ENCODE measurements at regions of chr15 and their contacts with region 1.

Region 1: GRCh38 chr15:60585743-60586708 is 107.1 kb upstream of the ICE2 start:
- DNase-seq: no peak
- H3K4me3 ChIP-seq: no peak overlapping the region
- H3K27ac ChIP-seq: peak overlapping the region in 1 of 4 donors; percentile 16
- H3K4me1 ChIP-seq: peaks cover 0 to 38% (median 22%) of the 10 kb centered on the region in 4 donors
- H3K27me3 ChIP-seq: no peaks in the 10 kb centered on the region
- CTCF ChIP-seq: peak; percentile 41 to 89 (median 84)
- EP300 ChIP-seq: no peak
- POLR2A ChIP-seq: no peak

Region 2: GRCh38 chr15:60520825-60521368 is 65.1 kb before region 1 on chr15:
- intact Hi-C with region 1: loop called (anchors 5 kb)
- DNase-seq: no peak
- H3K4me3 ChIP-seq: no peak overlapping the region
- H3K27ac ChIP-seq: no peak overlapping the region
- H3K4me1 ChIP-seq: no peaks in the 10 kb centered on the region
- H3K27me3 ChIP-seq: no peaks in the 10 kb centered on the region
- CTCF ChIP-seq: peak; percentile 36 to 85 (median 62)
- EP300 ChIP-seq: no peak
- POLR2A ChIP-seq: no peak

Region 3: DNA sequence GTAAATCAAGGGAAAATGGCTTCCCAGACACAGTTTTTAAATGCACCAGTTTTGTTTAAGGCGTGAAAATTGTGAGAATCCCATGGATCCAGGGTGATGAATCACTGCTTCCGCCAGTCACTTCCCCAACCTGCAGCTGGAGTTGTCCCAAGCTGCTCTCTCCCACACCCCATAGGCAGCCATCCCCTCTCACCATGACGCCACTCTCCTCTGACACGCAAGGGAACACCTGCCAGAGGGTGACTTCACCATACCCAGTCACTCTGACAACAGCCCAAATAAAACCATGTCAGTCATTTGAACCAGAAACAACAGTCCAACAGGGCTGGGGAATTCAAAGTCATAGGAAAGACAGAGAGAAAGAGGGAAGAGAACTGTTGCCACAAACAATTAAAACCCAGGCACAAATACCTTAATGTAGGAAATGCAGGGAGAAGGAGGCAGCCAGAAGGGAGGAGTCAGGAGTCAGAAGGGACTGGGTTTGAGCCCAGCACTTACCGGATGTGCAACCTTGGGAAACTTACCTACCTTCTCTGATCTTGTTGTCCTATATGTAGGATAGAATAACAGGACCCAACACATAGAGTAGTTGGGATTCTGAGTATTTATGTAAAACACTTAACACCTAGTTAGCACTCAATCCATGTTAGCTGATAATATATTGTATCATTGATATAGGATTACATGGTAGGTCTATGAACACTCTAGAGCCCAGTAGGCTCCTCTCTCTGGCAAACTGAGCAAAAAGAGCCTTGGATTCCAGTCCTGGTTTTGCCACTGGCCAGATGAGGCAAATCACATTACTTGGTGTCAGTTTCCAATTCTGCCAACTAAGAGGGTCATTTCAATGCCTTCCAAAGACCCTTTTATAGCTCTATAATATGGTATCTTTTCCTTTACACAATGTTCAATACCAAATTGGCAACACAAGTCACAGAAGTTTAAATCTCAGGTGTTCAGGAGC is 219.2 kb after region 1 on chr15:
- intact Hi-C with region 1: loop called (anchors 10 kb)
- DNase-seq: no peak
- H3K4me3 ChIP-seq: no peak overlapping the region
- H3K27ac ChIP-seq: no peak overlapping the region
- H3K4me1 ChIP-seq: peaks cover 0 to 32% (median 21%) of the 10 kb centered on the region in 4 donors
- H3K27me3 ChIP-seq: no peaks in the 10 kb centered on the region
- CTCF ChIP-seq: no peak
- EP300 ChIP-seq: no peak
- POLR2A ChIP-seq: no peak

Region 4: GRCh38 chr15:61051569-61052031 is 465.6 kb after region 1 on chr15:
- intact Hi-C with region 1: loop called (anchors 2 kb)
- DNase-seq: peak; percentile 71
- H3K4me3 ChIP-seq: no peak overlapping the region
- H3K27ac ChIP-seq: peak overlapping the region in 3 of 4 donors; percentile 57 to 64 (median 57)
- H3K4me1 ChIP-seq: peaks cover 0 to 36% (median 21%) of the 10 kb centered on the region in 4 donors
- H3K27me3 ChIP-seq: no peaks in the 10 kb centered on the region
- CTCF ChIP-seq: peak; percentile 11 to 61 (median 45)
- EP300 ChIP-seq: no peak
- POLR2A ChIP-seq: no peak

Region 5: DNA sequence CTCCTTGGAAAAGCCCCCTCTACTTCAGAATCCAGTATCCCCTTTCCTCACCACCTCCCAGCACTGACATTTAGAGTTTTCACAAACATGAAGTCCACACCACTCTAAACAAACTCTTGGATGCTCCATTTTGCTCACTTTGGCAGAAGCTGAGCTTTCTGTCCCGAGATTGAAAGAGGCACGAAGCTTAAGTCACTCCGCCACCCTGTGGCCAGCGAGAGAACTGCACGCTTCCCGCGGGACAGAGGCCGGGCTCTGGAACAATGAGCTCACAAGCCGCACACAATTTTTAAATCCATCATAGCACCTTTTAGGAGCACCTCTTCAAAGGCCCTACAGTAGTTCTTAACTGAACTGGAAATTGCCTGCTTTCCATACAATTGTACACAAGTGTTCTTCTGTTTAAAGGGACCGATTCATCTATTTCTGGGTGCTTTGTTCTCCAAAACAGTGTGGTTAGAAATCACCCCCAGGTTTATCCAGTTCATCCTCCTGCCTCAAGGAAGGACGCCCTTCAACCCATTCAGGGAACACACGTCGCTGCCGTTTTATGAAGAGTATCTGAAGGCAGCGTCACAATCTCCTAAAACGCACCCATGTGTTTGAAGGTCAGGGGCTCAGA is 1248.2 kb after region 1 on chr15:
- intact Hi-C with region 1: loop called (anchors 5 kb)
- DNase-seq: peak; percentile 88
- H3K4me3 ChIP-seq: no peak overlapping the region
- H3K27ac ChIP-seq: no peak overlapping the region
- H3K4me1 ChIP-seq: peaks cover 0 to 5% (median 0%) of the 10 kb centered on the region in 4 donors
- H3K27me3 ChIP-seq: no peaks in the 10 kb centered on the region
- CTCF ChIP-seq: peak; percentile 78 to 95 (median 85)
- EP300 ChIP-seq: no peak
- POLR2A ChIP-seq: no peak

Measured in sigmoid colon (tissue), 7 donors.